Activated CD8-positive, alpha-beta memory T cell treated with anti-CD3 and anti-CD28 coated beads, Interleukin-2, amount 10 ng/mL, durations not matched to agents 7 days and 5 days (primary cell): ENCODE measurements at regions of chr18 and their contacts with region 1.

Region 1: DNA sequence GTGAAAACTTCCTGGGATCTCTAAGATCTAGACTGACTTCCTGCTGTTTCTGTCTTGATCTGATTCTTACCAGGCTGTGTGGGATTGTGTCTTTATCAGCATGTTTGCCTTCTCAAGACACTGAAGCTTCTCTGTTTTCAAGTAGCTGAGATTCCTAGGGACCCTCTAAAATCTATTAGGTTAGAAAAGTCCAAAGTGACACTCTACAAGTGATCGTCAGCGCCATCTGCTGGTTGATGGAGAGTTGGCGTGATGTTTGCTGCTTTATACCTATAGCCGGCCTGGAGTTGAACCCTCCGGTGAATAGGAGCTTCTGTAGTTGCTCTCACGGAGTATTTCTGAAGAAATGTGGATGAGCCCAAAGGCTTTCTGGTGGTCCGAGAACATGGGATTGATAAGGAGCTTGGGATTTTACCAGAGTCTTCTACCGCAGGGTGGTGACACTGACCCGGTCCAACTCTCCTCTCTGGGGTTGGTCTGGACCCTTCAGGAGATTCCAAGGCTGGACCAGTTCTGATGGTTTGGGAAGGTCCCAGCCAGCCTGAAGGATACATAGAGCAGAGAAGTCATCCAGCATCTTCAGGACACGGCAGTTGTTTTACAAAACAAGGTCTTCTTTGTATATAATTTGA is 96.0 kb upstream of the TTC39C start:
- DNase-seq: peak; percentile 88
- ATAC-seq: peak; percentile 75
- H3K4me3 Mint-ChIP-seq: no peak overlapping the region
- H3K27ac Mint-ChIP-seq: no peak overlapping the region
- H3K4me1 Mint-ChIP-seq: peaks cover 25% of the 10 kb centered on the region
- H3K27me3 Mint-ChIP-seq: peaks cover 27% of the 10 kb centered on the region

Region 2: DNA sequence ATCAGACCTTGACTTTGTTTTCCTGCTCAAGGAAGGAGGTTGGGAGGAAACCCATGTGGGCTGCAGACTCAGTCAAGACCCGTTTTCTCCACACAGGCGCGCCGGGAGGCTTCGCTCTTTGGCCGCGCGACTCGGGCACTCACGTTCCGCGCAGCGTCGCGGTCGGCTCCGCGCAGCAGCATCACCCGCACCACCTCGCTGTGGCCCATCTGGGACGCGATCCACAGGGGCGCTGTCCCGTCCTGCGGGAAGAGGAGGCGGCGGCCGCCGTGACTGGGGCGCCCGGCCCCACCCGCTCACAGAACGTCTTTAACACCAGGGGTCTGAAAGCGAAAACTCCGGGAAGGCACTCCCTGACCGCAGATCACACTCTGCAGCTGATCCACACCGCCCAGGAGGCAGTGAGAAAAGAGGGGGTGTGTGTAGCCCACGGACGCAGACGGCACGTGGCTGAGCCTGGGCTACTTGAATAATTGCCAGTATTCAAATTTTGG is 299.1 kb before region 1 on chr18:
- CTCF ChIA-PET with region 1: interaction called, 19 read pairs
- DNase-seq: no peak
- ATAC-seq: peak; percentile 62
- H3K4me3 Mint-ChIP-seq: peak overlapping the region; percentile 44
- H3K27ac Mint-ChIP-seq: no peak overlapping the region
- H3K4me1 Mint-ChIP-seq: peaks cover 6% of the 10 kb centered on the region
- H3K27me3 Mint-ChIP-seq: peaks cover 58% of the 10 kb centered on the region

Region 3: DNA sequence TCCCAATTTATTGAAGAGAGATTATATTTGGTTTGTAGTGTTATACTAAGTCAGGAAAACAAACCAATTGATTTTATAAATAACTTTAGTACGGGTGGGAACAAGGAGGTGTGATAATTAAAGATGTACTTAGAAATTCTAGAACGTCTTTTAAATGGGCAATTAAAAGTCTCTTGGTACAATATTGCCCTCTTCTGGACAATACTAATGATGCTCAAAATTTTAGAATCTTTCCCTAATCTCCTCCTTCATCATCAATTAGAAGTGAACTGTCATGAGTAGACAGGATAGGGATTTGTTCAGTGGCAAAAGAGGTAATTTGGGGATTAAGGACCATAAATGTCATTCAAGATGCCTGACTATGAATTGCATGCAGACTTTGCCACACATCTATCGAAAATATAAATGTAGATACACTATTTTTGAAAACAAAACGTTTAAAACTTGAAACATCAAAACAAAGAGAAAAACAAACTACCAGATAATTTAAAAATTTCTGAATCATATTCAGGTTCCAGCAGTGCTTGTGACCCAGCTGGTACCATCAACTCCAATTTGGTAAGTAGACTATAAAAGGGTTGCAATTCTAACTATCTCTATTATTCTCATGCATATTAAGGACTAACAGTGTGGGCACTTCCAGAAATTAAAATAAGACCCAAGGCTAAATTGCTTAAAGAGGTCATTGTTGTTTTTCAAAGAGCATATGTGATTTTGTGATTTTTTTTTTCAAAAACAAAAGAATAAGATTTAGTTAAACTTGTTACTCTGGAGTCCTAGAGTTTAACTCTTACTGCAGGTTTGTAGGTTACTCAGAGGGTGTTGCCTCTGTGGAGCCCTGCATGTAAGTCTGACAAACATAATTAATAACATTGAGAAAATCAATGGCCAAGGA is 105.7 kb before region 1 on chr18:
- CTCF ChIA-PET with region 1: interaction called, 12 read pairs
- DNase-seq: no peak
- ATAC-seq: no peak
- H3K4me3 Mint-ChIP-seq: no peak overlapping the region
- H3K27ac Mint-ChIP-seq: no peak overlapping the region
- H3K4me1 Mint-ChIP-seq: peaks cover 32% of the 10 kb centered on the region
- H3K27me3 Mint-ChIP-seq: peaks cover 21% of the 10 kb centered on the region

Region 4: GRCh38 chr18:23828426-23828825 is 90.1 kb before region 1 on chr18:
- CTCF ChIA-PET with region 1: interaction called, 32 read pairs
- DNase-seq: peak; percentile 81
- ATAC-seq: peak; percentile 99
- H3K4me3 Mint-ChIP-seq: no peak overlapping the region
- H3K27ac Mint-ChIP-seq: peak overlapping the region; percentile 86
- H3K4me1 Mint-ChIP-seq: peaks cover 40% of the 10 kb centered on the region
- H3K27me3 Mint-ChIP-seq: no peaks in the 10 kb centered on the region

Region 5: GRCh38 chr18:23900994-23901393 is 17.5 kb before region 1 on chr18:
- CTCF ChIA-PET with region 1: interaction called, 14 read pairs
- DNase-seq: no peak
- ATAC-seq: peak; percentile 9
- H3K4me3 Mint-ChIP-seq: no peak overlapping the region
- H3K27ac Mint-ChIP-seq: no peak overlapping the region
- H3K4me1 Mint-ChIP-seq: peaks cover 9% of the 10 kb centered on the region
- H3K27me3 Mint-ChIP-seq: peaks cover 18% of the 10 kb centered on the region

Region 6: DNA sequence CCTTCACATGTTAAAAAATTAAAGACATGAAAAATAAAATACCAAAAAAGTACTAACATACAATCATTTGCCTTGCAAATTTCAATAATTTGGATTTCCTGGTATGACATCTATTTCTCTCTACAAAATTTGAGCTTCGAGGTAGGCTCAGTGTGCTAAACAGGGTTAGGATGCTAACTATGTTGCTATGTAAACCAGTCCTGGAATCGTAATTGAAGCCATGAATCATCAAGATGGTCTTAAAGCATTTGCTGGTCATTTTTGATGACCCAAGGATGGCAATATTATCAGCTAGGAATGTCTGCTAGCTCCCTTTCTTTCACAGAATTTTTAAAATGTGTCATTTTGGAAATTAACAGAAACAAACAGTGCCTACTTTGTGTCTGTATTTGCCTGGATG is 11.9 kb before region 1 on chr18:
- CTCF ChIA-PET with region 1: interaction called, 14 read pairs
- DNase-seq: no peak
- ATAC-seq: no peak
- H3K4me3 Mint-ChIP-seq: no peak overlapping the region
- H3K27ac Mint-ChIP-seq: no peak overlapping the region
- H3K4me1 Mint-ChIP-seq: no peaks in the 10 kb centered on the region
- H3K27me3 Mint-ChIP-seq: peaks cover 9% of the 10 kb centered on the region

Region 7: GRCh38 chr18:23934252-23934651 is 15.7 kb after region 1 on chr18:
- CTCF ChIA-PET with region 1: interaction called, 25 read pairs
- DNase-seq: no peak
- ATAC-seq: no peak
- H3K4me3 Mint-ChIP-seq: no peak overlapping the region
- H3K27ac Mint-ChIP-seq: no peak overlapping the region
- H3K4me1 Mint-ChIP-seq: peaks cover 59% of the 10 kb centered on the region
- H3K27me3 Mint-ChIP-seq: peaks cover 17% of the 10 kb centered on the region

Region 8: GRCh38 chr18:24014062-24014985 is 95.8 kb after region 1 on chr18 and contains the start of gene TTC39C:
- CTCF ChIA-PET with region 1: no interaction called
- DNase-seq: peak; percentile 92
- ATAC-seq: peak; percentile 70
- H3K4me3 Mint-ChIP-seq: peak within 1 kb of the TSS; percentile 93
- H3K27ac Mint-ChIP-seq: peak within 1 kb of the TSS; percentile 82
- H3K4me1 Mint-ChIP-seq: peaks cover 72% of the 10 kb centered on the region
- H3K27me3 Mint-ChIP-seq: no peaks in the 10 kb centered on the region
- total RNA-seq, gene TTC39C: 59.0 to 69.7 TPM